AG04450 (cell line): ENCODE measurements at regions of chr6 and their contacts with region 1.

Region 1: GRCh38 chr6:14066782-14067406 is 50.7 kb upstream of the CD83 start:
- DNase-seq: peak; percentile 55
- H3K4me3 ChIP-seq: no peak overlapping the region
- H3K27ac ChIP-seq: no peak overlapping the region
- H3K27me3 ChIP-seq: no peaks in the 10 kb centered on the region
- CTCF ChIP-seq: peak; percentile 64

Region 2: GRCh38 chr6:13884397-13884796 is 182.5 kb before region 1 on chr6:
- CTCF ChIA-PET with region 1: interaction called, 21 read pairs
- POLR2A ChIA-PET with region 1: no interaction called
- DNase-seq: no peak
- H3K4me3 ChIP-seq: no peak overlapping the region
- H3K27ac ChIP-seq: no peak overlapping the region
- H3K27me3 ChIP-seq: no peaks in the 10 kb centered on the region
- CTCF ChIP-seq: no peak

Region 3: DNA sequence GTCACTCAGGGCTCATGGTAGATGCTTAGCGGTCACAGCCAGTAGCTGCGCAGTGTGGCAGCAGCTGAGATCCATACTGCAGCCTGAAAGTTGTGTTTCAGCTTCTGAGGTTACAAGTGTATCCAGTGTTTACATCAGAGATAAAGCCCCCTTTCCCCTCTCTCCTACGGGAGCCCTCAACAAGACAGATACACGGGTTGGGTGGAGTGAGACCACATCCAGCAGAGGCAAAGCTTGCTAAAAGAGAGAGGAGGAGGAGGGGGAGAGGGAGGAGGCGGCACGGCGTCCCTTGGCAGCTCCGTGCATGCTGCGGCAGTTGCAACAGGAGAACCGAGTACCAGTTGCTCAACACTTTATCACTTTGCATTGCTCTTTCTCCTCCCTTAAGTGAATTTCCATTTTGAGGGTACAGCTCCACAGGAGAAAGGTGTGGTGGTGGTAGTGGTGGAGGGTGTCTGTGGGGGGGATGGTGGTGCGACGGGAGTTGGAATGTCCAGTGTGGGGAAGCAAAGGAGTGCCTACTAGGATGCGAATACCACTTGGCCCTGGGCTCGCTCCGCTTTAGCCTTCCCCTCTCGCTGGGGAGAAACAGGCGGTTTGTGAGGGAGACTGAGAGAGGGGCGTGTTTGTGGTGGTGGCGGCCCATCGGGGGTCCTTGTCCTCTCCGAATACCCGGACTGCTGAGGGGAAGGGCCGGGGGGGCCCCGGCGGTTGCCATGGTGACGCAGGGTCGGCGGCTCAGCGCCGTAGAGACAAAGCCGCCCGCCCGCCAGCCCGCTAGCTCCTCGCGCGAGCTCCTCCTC is 142.5 kb before region 1 on chr6:
- CTCF ChIA-PET with region 1: interaction called, 73 read pairs
- POLR2A ChIA-PET with region 1: interaction called, 3 read pairs
- DNase-seq: no peak
- H3K4me3 ChIP-seq: peak overlapping the region; percentile 63
- H3K27ac ChIP-seq: peak overlapping the region; percentile 62
- H3K27me3 ChIP-seq: no peaks in the 10 kb centered on the region
- CTCF ChIP-seq: no peak

Region 4: GRCh38 chr6:14046476-14047068 is 20.3 kb before region 1 on chr6:
- CTCF ChIA-PET with region 1: interaction called, 81 read pairs
- POLR2A ChIA-PET with region 1: no interaction called
- DNase-seq: no peak
- H3K4me3 ChIP-seq: no peak overlapping the region
- H3K27ac ChIP-seq: no peak overlapping the region
- H3K27me3 ChIP-seq: no peaks in the 10 kb centered on the region
- CTCF ChIP-seq: peak; percentile 84